Common myeloid progenitor, CD34-positive (primary cell): ENCODE measurements at regions of chr21 and their contacts with region 1.

Region 1: DNA sequence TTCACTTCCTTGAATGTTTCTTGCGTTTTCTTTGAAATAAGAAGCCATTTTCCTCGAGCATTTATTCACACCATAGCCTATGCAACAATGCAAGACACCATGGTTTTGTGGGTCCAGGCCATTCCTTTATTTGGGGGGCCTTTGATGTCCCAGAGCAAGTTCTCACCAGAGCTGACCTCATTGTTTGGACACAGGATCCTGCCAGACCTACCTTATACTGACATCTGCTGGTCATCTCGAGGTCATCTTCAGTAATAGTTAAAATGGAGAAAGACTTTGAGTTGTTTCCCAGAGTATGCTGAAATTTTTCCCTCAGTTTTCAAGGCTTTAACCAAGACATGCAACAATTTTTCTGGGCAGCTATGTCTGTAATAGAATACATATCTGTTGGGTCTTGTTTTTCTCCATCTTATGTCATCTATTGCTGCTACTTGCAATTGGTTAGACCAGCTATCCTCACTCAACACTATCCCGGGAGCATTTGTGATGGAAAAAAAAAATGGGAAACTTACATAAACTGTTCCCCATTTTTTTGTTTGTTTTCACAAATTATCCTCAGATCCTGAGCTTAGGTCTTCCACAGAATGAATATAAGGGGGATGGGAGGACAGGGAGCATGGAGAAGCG is 34.0 kb upstream of the BACE2 start:
- DNase-seq: peak; percentile 13 to 26 (median 17)
- H3K4me3 ChIP-seq: no peak overlapping the region
- H3K27ac ChIP-seq: no peak overlapping the region
- H3K4me1 ChIP-seq: peaks cover 0 to 3% (median 0%) of the 10 kb centered on the region in 4 experiments
- H3K27me3 ChIP-seq: peaks cover 0 to 3% (median 0%) of the 10 kb centered on the region in 5 experiments

Region 2: GRCh38 chr21:41121785-41122421 is 12.1 kb before region 1 on chr21:
- CTCF ChIA-PET with region 1: interaction called, 20 read pairs
- POLR2A ChIA-PET with region 1: no interaction called
- DNase-seq: peak; percentile 74 to 86 (median 80)
- H3K4me3 ChIP-seq: no peak overlapping the region
- H3K27ac ChIP-seq: no peak overlapping the region
- H3K4me1 ChIP-seq: no peaks in the 10 kb centered on the region
- H3K27me3 ChIP-seq: peaks cover 0 to 7% (median 0%) of the 10 kb centered on the region in 5 experiments

Region 3: GRCh38 chr21:41207401-41208068 is 73.5 kb after region 1 on chr21:
- CTCF ChIA-PET with region 1: no interaction called
- POLR2A ChIA-PET with region 1: no interaction called
- DNase-seq: no peak
- H3K4me3 ChIP-seq: no peak overlapping the region
- H3K27ac ChIP-seq: no peak overlapping the region
- H3K4me1 ChIP-seq: no peaks in the 10 kb centered on the region
- H3K27me3 ChIP-seq: peaks cover 0 to 2% (median 0%) of the 10 kb centered on the region in 5 experiments